K562 (cell line): ENCODE measurements at regions of chr17 and their contacts with region 1.

Region 1: DNA sequence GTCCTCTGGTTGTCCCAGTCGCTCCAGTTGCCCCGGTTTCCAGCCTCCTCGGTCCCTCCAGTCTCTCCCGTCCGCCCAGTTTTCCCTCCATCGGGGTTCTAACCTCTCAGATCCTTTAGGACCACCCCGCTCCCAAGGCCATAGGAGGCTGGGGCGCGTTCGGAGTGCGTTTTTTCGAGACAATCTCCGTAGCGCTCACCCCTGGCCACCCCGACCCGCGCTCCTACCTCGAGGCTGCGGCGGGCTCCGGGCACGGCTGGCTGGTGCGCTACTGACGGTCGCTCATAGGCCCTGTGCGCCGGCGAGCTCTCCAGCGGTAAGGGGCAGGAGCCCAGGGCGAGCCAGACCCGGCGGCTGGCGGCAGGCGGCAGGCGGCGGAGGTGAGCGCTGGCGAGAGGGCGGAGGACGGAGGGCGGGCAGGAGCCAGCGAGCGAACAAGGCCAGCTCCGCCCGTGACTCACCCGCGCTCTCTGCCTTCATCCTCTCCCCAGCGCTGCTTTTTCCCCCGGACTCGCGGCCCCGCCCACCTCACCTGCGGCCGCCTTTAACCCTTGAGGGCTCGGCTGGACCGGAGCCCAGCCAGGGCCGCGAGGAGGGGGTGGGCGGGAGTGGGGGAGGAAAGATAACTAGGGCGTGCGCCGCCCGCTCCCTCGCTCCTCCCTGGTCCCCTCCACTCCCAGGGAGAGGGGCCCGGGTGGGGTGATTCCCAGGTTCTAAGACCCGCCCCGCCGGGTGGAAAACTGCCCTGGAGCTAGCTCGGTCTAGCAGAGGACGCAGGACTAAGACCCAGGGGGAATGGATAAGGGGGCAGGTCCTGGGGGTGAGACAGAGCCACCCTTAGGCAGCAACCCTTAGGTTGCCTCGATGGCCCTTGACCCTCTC is at the start of gene SP6:
- DNase-seq: peak; percentile 89 to 93 (median 92)
- ATAC-seq: peak; percentile 94
- H3K4me3 ChIP-seq: peak within 1 kb of the TSS; percentile 43
- H3K27ac ChIP-seq: peak within 1 kb of the TSS; percentile 65
- H3K4me1 ChIP-seq: peaks cover 33 to 45% of the 10 kb centered on the region in 2 experiments; a peak in 4 of 5 replicates
- H3K27me3 ChIP-seq: peaks cover 0 to 2% of the 10 kb centered on the region in 2 experiments; a peak in 1 of 5 replicates
- CTCF ChIP-seq: peak in 2 of 3 experiments; percentile 26 to 41; a peak in 3 of 6 replicates
- EP300 ChIP-seq: no peak
- POLR2A ChIP-seq: peak; percentile 60
- RAD21 ChIP-seq: peak; percentile 37 to 44; a peak in 3 of 4 replicates
- polyA plus RNA-seq, gene SP6: 0.11 TPM

Region 2: DNA sequence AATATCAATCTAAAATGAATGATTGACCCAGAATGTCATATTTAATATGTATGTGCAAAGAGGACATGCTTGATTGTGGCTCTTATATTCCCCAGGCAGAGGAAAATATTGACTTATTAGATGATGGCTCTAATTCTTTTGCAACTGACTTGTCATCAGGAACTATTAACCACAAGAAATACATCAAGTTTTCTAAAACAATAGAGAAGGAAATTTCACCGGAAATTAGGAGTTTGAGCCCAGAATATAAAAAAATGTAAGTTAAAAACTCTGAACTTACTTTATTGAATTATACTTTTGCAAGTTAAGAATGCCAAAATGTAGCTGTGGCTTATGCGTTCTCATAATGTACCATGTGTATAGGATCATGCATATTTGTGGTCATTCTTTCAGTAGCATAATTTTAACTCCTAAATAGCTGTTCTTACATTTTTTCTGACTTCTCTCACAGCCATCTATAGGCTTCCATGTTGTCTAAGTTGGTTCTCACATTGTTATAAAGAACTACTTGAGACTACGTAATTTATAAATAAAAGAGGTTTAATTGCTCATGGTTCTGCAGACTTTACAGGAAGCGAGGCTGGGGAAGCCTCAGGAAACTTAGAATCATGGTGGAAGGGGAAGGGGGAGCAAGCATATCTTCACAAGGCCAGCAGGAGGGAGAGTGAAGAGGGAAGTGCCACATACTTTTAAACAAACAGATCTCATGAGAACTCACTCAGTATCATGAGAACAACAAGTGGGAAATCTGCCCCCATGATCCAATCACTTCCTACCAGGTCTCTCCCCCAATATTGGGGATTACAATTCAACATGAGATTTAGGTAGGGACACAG is 515.6 kb before region 1 on chr17:
- CTCF ChIA-PET with region 1: no interaction called
- POLR2A ChIA-PET with region 1: no interaction called
- in situ Hi-C with region 1: no loop called
- intact Hi-C with region 1: no loop called
- DNase-seq: no peak
- ATAC-seq: no peak
- H3K4me3 ChIP-seq: no peak overlapping the region
- H3K27ac ChIP-seq: no peak overlapping the region
- H3K4me1 ChIP-seq: no peaks in the 10 kb centered on the region
- H3K27me3 ChIP-seq: no peaks in the 10 kb centered on the region
- CTCF ChIP-seq: no peak
- EP300 ChIP-seq: no peak
- POLR2A ChIP-seq: no peak
- RAD21 ChIP-seq: no peak

Region 3: GRCh38 chr17:47829870-47830269 is 21.1 kb before region 1 on chr17:
- CTCF ChIA-PET with region 1: no interaction called
- POLR2A ChIA-PET with region 1: no interaction called
- in situ Hi-C with region 1: no loop called
- intact Hi-C with region 1: no loop called
- DNase-seq: no peak
- ATAC-seq: no peak
- H3K4me3 ChIP-seq: peak overlapping the region; percentile 61; the same call in 1 of the 2 replicates
- H3K27ac ChIP-seq: peak overlapping the region; percentile 82; the same call in 2 of the 3 replicates
- H3K4me1 ChIP-seq: peaks cover 15 to 27% of the 10 kb centered on the region in 2 experiments
- H3K27me3 ChIP-seq: no peaks in the 10 kb centered on the region
- CTCF ChIP-seq: no peak
- EP300 ChIP-seq: no peak
- POLR2A ChIP-seq: no peak
- RAD21 ChIP-seq: no peak

Region 4: GRCh38 chr17:47889734-47890529 is 39.0 kb after region 1 on chr17:
- CTCF ChIA-PET with region 1: interaction called, 11 read pairs
- POLR2A ChIA-PET with region 1: interaction called, 11 read pairs
- in situ Hi-C with region 1: no loop called
- intact Hi-C with region 1: no loop called
- DNase-seq: peak; percentile 72 to 90 (median 74)
- ATAC-seq: peak; percentile 98
- H3K4me3 ChIP-seq: no peak overlapping the region
- H3K27ac ChIP-seq: no peak overlapping the region
- H3K4me1 ChIP-seq: peaks cover 12 to 26% of the 10 kb centered on the region in 2 experiments
- H3K27me3 ChIP-seq: no peaks in the 10 kb centered on the region; a peak in 1 of 5 replicates
- CTCF ChIP-seq: peak; percentile 93 to 97 (median 96)
- EP300 ChIP-seq: no peak
- POLR2A ChIP-seq: no peak
- RAD21 ChIP-seq: peak; percentile 100